H1 (cell line): ENCODE measurements at regions of chr7 and their contacts with region 1.

Region 1: GRCh38 chr7:34133983-34134782 is 228.8 kb downstream of the BMPER start:
- DNase-seq: peak; percentile 58 to 89
- H3K4me3 ChIP-seq: no peak overlapping the region
- H3K27ac ChIP-seq: no peak overlapping the region
- H3K4me1 ChIP-seq: peaks cover 0 to 9% (median 4%) of the 10 kb centered on the region in 4 experiments; a peak in 6 of 7 replicates
- H3K27me3 ChIP-seq: no peaks in the 10 kb centered on the region
- CTCF ChIP-seq: peak; percentile 70 to 87 (median 83)
- EP300 ChIP-seq: no peak
- POLR2A ChIP-seq: no peak
- RAD21 ChIP-seq: peak; percentile 97 to 98

Region 2: GRCh38 chr7:34080516-34080915 is 53.7 kb before region 1 on chr7:
- CTCF ChIA-PET with region 1: no interaction called
- POLR2A ChIA-PET with region 1: no interaction called
- DNase-seq: no peak
- H3K4me3 ChIP-seq: no peak overlapping the region
- H3K27ac ChIP-seq: no peak overlapping the region
- H3K4me1 ChIP-seq: no peaks in the 10 kb centered on the region; a peak in 3 of 7 replicates
- H3K27me3 ChIP-seq: no peaks in the 10 kb centered on the region
- CTCF ChIP-seq: no peak
- EP300 ChIP-seq: no peak
- POLR2A ChIP-seq: no peak
- RAD21 ChIP-seq: no peak

Region 3: GRCh38 chr7:34123316-34123715 is 10.9 kb before region 1 on chr7:
- CTCF ChIA-PET with region 1: interaction called, 14 read pairs
- POLR2A ChIA-PET with region 1: no interaction called
- DNase-seq: no peak
- H3K4me3 ChIP-seq: no peak overlapping the region
- H3K27ac ChIP-seq: no peak overlapping the region
- H3K4me1 ChIP-seq: no peaks in the 10 kb centered on the region
- H3K27me3 ChIP-seq: no peaks in the 10 kb centered on the region
- CTCF ChIP-seq: no peak
- EP300 ChIP-seq: no peak
- POLR2A ChIP-seq: no peak
- RAD21 ChIP-seq: no peak

Region 4: DNA sequence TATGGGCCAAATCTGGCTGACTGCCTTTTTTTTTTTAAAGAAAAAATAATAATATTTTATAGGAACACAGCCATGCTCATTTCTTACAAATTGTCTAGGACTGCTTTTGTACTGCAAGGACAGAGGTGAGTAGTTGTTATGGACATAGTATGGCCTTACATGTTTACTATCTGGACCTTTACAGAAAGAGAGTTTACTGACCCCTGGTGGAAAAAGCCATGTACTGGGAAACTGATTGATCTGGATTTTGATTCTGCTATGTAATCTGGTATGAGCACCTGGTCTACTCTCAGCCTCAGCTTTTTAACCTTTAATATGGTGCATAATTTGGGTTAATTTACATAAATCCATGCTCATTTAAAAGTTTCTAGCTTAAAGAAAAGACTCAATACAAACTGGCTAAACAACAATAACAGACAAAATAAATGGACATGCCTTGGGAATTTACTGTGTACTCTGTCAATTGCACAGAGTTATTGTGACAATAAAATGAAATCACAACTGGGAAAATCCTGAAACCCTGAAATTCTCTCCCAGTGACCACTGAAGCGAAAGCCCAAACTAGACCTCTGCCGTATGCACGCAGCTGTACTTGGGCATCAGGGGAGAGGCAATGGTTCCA is 31.9 kb after region 1 on chr7:
- CTCF ChIA-PET with region 1: interaction called, 197 read pairs
- POLR2A ChIA-PET with region 1: no interaction called
- DNase-seq: no peak
- H3K4me3 ChIP-seq: no peak overlapping the region
- H3K27ac ChIP-seq: no peak overlapping the region
- H3K4me1 ChIP-seq: no peaks in the 10 kb centered on the region
- H3K27me3 ChIP-seq: no peaks in the 10 kb centered on the region
- CTCF ChIP-seq: peak in 2 of 3 experiments; percentile 55 to 76; a peak in 3 of 4 replicates
- EP300 ChIP-seq: no peak
- POLR2A ChIP-seq: no peak
- RAD21 ChIP-seq: peak; percentile 64 to 70

Region 5: DNA sequence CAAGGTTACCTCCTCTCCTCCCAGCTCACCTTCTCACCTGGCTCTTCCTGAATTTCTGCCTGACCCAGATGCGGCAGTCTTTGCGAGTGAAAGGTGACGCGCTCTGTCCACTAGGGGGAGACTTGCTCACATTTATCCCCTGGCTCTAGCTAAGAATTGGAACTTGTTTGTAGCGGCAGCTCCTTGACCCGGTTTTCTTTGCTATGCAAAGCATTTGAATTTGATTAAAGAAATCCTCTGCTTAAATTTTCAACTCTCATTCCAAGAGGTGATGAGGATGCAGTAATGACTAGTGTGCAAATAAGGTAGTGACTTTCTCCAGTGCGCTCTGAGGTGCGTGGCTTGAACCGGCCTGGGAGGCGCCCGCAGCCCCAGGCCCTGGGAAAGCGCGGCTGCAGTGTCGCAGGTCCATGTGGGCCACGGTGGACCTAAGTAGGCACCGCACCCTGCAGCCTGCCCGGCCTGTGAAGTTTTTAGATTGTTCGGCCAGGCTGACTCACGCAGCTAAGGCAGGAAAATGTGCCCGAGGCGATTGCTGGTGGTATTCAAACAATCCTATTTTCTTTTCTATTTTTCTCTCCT is 186.9 kb after region 1 on chr7:
- CTCF ChIA-PET with region 1: interaction called, 28 read pairs
- POLR2A ChIA-PET with region 1: no interaction called
- DNase-seq: peak; percentile 49 to 74
- H3K4me3 ChIP-seq: peak overlapping the region; percentile 24 to 54 (median 36); a peak in 7 of 8 replicates
- H3K27ac ChIP-seq: no peak overlapping the region
- H3K4me1 ChIP-seq: no peaks in the 10 kb centered on the region; a peak in 2 of 7 replicates
- H3K27me3 ChIP-seq: no peaks in the 10 kb centered on the region
- CTCF ChIP-seq: peak; percentile 86 to 95 (median 88)
- EP300 ChIP-seq: 0 out of 3 replicates have a peak, but pooled peaks of 1 of the 2 experiments have one; percentile 9
- POLR2A ChIP-seq: no peak
- RAD21 ChIP-seq: peak; percentile 91 to 92

Region 6: DNA sequence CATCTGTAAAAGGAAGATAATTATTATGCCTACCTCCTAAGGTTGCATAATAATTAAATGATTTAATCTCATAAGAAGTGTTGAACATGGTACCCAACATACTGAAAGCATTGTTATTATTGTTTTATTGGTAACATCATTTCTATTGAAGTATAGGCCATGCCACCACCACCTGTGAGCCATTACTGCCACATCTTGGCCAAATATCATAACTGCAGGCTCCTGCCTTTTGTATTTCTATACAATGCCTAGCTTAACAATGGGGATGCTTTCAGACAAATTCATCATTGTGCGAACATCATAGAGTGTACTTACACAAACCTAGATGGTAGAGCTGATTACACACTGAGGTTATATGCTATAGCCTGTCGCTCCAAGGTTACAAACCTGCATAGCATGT is 462.7 kb after region 1 on chr7:
- CTCF ChIA-PET with region 1: interaction called, 24 read pairs
- POLR2A ChIA-PET with region 1: no interaction called
- DNase-seq: no peak
- H3K4me3 ChIP-seq: no peak overlapping the region
- H3K27ac ChIP-seq: no peak overlapping the region
- H3K4me1 ChIP-seq: no peaks in the 10 kb centered on the region; a peak in 1 of 7 replicates
- H3K27me3 ChIP-seq: no peaks in the 10 kb centered on the region
- CTCF ChIP-seq: peak in 2 of 3 experiments; percentile 60 to 72; a peak in 3 of 4 replicates
- EP300 ChIP-seq: no peak
- POLR2A ChIP-seq: no peak
- RAD21 ChIP-seq: peak; percentile 85 to 87